ENCODE measurements at regions of chr16 and their contacts with region 1.

Region 1: GRCh38 chr16:12062343-12063005 is 85.9 kb downstream of the SNX29 start:
- DNase-seq: peak; percentile 91 to 93
- H3K4me3 ChIP-seq: no peak overlapping the region
- H3K27ac ChIP-seq: peak overlapping the region; percentile 83 to 98 (median 97)
- H3K4me1 ChIP-seq: peaks cover 39 to 63% of the 10 kb centered on the region in 2 donors
- H3K27me3 ChIP-seq: no peaks in the 10 kb centered on the region
- CTCF ChIP-seq: no peak
- POLR2A ChIP-seq: no peak

Region 2: DNA sequence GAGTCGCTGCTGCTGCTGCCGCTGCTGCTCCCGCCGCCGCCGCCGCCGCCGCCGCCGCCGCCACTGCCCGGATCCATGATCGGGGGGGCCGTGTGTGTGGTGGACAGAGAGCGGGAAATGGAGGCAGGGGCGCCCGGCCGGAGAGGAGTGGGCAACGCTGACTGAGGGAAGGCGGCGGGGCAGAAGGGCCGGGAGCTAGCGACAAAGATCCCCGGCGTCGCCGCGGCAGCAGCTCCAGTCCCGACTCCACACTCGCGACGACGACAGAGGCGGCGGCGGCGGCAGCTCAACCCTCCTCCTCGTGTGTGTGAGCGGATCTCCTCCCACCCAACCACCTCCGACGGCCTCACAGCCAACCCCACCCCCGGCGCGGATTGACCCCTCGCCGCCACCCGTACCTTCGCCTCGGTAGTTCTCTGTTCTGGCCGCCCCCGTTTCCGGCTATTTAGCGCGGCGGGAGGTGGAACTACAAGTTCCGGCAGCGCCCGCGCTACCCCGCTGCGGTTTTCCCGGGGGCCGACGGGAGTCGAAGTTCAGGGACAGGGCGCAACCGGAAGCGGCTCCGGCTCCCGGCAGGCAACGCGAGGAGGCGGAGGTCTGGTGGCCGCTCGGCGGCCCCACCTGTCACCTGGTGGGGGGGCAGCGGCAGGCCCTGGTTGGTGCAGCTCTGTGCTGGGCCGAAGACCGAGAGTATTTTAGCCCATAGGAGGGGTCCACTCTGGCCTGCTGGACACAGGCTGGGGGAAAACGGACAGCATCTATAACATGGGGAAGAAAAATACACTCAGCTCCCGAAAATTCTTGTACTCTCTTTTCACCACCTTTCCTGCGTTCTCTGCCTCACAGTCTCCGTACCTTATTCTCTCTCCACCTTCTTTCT is 146.6 kb before region 1 on chr16 and contains the start of gene GSPT1:
- intact Hi-C with region 1: no loop called
- DNase-seq: peak; percentile 99 to 100
- H3K4me3 ChIP-seq: peak within 1 kb of the TSS; percentile 59 to 99 (median 77)
- H3K27ac ChIP-seq: peak within 1 kb of the TSS; percentile 85 to 92 (median 88)
- H3K4me1 ChIP-seq: peaks cover 25 to 26% of the 10 kb centered on the region in 2 donors
- H3K27me3 ChIP-seq: no peaks in the 10 kb centered on the region
- CTCF ChIP-seq: peak in 4 of 6 experiments; percentile 13 to 34 (median 17)
- POLR2A ChIP-seq: peak; percentile 82 to 94
- total RNA-seq, gene GSPT1: 71.9 to 106 (median 86.6) TPM

Region 3: GRCh38 chr16:11950388-11950787 is 112.1 kb before region 1 on chr16:
- intact Hi-C with region 1: loop called (anchors 5 kb)
- DNase-seq: no peak
- H3K4me3 ChIP-seq: no peak overlapping the region
- H3K27ac ChIP-seq: no peak overlapping the region
- H3K4me1 ChIP-seq: peaks cover 5 to 14% of the 10 kb centered on the region in 2 donors
- H3K27me3 ChIP-seq: no peaks in the 10 kb centered on the region
- CTCF ChIP-seq: no peak
- POLR2A ChIP-seq: no peak

Measured in thyroid gland (tissue), 4 donors.